ENCODE measurements at regions of chr6 and their contacts with region 1.

Region 1: DNA sequence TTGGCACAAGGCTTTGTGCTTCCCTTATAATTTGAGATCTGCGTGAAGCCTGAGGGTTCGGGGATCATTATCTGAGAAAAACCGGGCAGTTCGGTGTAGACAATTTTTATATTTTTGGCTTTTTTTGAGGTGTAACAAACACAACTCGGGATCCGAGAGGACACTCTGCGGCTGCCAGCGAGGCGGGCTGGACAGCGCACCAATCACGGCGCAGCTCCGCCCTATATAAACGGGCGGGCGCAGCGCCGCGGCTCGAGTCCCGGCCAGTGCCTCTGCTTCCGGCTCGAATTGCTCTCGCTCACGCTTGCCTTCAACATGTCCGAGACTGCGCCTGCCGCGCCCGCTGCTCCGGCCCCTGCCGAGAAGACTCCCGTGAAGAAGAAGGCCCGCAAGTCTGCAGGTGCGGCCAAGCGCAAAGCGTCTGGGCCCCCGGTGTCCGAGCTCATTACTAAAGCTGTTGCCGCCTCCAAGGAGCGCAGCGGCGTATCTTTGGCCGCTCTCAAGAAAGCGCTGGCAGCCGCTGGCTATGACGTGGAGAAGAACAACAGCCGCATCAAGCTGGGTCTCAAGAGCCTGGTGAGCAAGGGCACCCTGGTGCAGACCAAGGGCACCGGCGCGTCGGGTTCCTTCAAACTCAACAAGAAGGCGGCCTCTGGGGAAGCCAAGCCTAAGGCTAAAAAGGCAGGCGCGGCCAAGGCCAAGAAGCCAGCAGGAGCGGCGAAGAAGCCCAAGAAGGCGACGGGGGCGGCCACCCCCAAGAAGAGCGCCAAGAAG is 69.0 kb downstream of the HFE start:
- DNase-seq: peak; percentile 76 to 94 (median 88)
- ATAC-seq: peak; percentile 33
- H3K4me3 ChIP-seq: peak overlapping the region; percentile 92
- H3K4me3 Mint-ChIP-seq: peak overlapping the region; percentile 99
- H3K27ac ChIP-seq: peak overlapping the region; percentile 67 to 91
- H3K27ac Mint-ChIP-seq: peak overlapping the region; percentile 97
- H3K4me1 ChIP-seq: peaks cover 37% of the 10 kb centered on the region
- H3K4me1 Mint-ChIP-seq: peaks cover 40% of the 10 kb centered on the region
- H3K27me3 ChIP-seq: no peaks in the 10 kb centered on the region
- H3K27me3 Mint-ChIP-seq: peaks cover 12% of the 10 kb centered on the region
- CTCF ChIP-seq: no peak

Region 2: GRCh38 chr6:25821341-25821740 is 334.9 kb before region 1 on chr6:
- CTCF ChIA-PET with region 1: no interaction called
- POLR2A ChIA-PET with region 1: no interaction called
- intact Hi-C with region 1: no loop called
- DNase-seq: no peak
- ATAC-seq: no peak
- H3K4me3 ChIP-seq: no peak overlapping the region
- H3K4me3 Mint-ChIP-seq: no peak overlapping the region
- H3K27ac ChIP-seq: no peak overlapping the region
- H3K27ac Mint-ChIP-seq: no peak overlapping the region
- H3K4me1 ChIP-seq: no peaks in the 10 kb centered on the region
- H3K4me1 Mint-ChIP-seq: no peaks in the 10 kb centered on the region
- H3K27me3 ChIP-seq: no peaks in the 10 kb centered on the region
- H3K27me3 Mint-ChIP-seq: peaks cover 22% of the 10 kb centered on the region
- CTCF ChIP-seq: no peak

Region 3: GRCh38 chr6:26025894-26026832 is 130.1 kb before region 1 on chr6:
- CTCF ChIA-PET with region 1: no interaction called
- POLR2A ChIA-PET with region 1: interaction called, 164 read pairs
- intact Hi-C with region 1: loop called in 1 of 2 experiments (anchors 2 kb)
- DNase-seq: peak; percentile 75 to 98 (median 88)
- ATAC-seq: peak; percentile 45
- H3K4me3 ChIP-seq: peak overlapping the region; percentile 70
- H3K4me3 Mint-ChIP-seq: peak overlapping the region; percentile 90
- H3K27ac ChIP-seq: peak overlapping the region; percentile 86 to 88
- H3K27ac Mint-ChIP-seq: peak overlapping the region; percentile 97
- H3K4me1 ChIP-seq: peaks cover 34% of the 10 kb centered on the region
- H3K4me1 Mint-ChIP-seq: peaks cover 42% of the 10 kb centered on the region
- H3K27me3 ChIP-seq: no peaks in the 10 kb centered on the region
- H3K27me3 Mint-ChIP-seq: no peaks in the 10 kb centered on the region
- CTCF ChIP-seq: peak; percentile 86

Region 4: DNA sequence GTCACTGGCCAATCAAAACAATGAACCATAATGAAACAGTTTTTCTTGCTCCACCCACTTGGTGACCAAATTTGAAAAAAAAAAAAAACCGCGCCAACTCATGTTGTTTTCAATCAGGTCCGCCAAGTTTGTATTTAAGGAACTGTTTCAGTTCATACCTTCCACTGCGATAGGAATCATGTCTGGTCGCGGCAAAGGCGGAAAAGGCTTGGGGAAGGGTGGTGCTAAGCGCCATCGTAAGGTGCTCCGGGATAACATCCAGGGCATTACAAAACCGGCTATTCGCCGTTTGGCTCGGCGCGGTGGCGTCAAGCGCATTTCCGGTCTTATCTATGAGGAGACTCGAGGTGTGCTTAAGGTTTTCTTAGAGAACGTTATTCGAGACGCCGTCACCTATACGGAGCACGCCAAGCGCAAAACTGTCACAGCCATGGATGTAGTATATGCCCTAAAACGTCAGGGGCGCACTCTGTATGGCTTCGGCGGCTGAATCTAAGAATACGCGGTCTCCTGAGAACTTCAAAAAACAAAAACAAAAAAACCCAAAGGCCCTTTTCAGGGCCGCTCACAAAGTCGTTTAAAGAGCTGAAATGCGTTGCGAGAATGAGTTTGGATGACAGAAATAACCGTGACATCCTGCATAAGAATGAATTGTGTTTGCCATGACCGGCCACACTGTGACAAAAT is 52.4 kb before region 1 on chr6:
- CTCF ChIA-PET with region 1: interaction called, 18 read pairs
- POLR2A ChIA-PET with region 1: interaction called, 261 read pairs
- intact Hi-C with region 1: loop called (anchors 1 kb)
- DNase-seq: peak; percentile 84 to 96 (median 90)
- ATAC-seq: peak; percentile 88
- H3K4me3 ChIP-seq: peak overlapping the region; percentile 58
- H3K4me3 Mint-ChIP-seq: peak overlapping the region; percentile 94
- H3K27ac ChIP-seq: peak overlapping the region; percentile 83 to 85
- H3K27ac Mint-ChIP-seq: peak overlapping the region; percentile 99
- H3K4me1 ChIP-seq: peaks cover 16% of the 10 kb centered on the region
- H3K4me1 Mint-ChIP-seq: peaks cover 13% of the 10 kb centered on the region
- H3K27me3 ChIP-seq: no peaks in the 10 kb centered on the region
- H3K27me3 Mint-ChIP-seq: peaks cover 5% of the 10 kb centered on the region
- CTCF ChIP-seq: peak; percentile 58

Region 5: GRCh38 chr6:26196846-26197648 is 40.8 kb after region 1 on chr6:
- CTCF ChIA-PET with region 1: interaction called, 35 read pairs
- POLR2A ChIA-PET with region 1: interaction called, 1,305 read pairs
- intact Hi-C with region 1: loop called (anchors 1 to 2 kb)
- DNase-seq: peak; percentile 60 to 97 (median 70)
- ATAC-seq: peak; percentile 55
- H3K4me3 ChIP-seq: peak overlapping the region; percentile 75
- H3K4me3 Mint-ChIP-seq: peak overlapping the region; percentile 94
- H3K27ac ChIP-seq: peak overlapping the region; percentile 81 to 87
- H3K27ac Mint-ChIP-seq: peak overlapping the region; percentile 97
- H3K4me1 ChIP-seq: peaks cover 26% of the 10 kb centered on the region
- H3K4me1 Mint-ChIP-seq: peaks cover 57% of the 10 kb centered on the region
- H3K27me3 ChIP-seq: no peaks in the 10 kb centered on the region
- H3K27me3 Mint-ChIP-seq: no peaks in the 10 kb centered on the region
- CTCF ChIP-seq: no peak

Region 6: GRCh38 chr6:26285143-26286134 is 129.2 kb after region 1 on chr6:
- CTCF ChIA-PET with region 1: no interaction called
- POLR2A ChIA-PET with region 1: interaction called, 98 read pairs
- intact Hi-C with region 1: no loop called
- DNase-seq: peak; percentile 85 to 99 (median 92)
- ATAC-seq: peak; percentile 82
- H3K4me3 ChIP-seq: peak overlapping the region; percentile 62
- H3K4me3 Mint-ChIP-seq: peak overlapping the region; percentile 87
- H3K27ac ChIP-seq: peak overlapping the region; percentile 82 to 85
- H3K27ac Mint-ChIP-seq: peak overlapping the region; percentile 96
- H3K4me1 ChIP-seq: peaks cover 16% of the 10 kb centered on the region
- H3K4me1 Mint-ChIP-seq: peaks cover 24% of the 10 kb centered on the region
- H3K27me3 ChIP-seq: no peaks in the 10 kb centered on the region
- H3K27me3 Mint-ChIP-seq: peaks cover 11% of the 10 kb centered on the region
- CTCF ChIP-seq: no peak

Region 7: DNA sequence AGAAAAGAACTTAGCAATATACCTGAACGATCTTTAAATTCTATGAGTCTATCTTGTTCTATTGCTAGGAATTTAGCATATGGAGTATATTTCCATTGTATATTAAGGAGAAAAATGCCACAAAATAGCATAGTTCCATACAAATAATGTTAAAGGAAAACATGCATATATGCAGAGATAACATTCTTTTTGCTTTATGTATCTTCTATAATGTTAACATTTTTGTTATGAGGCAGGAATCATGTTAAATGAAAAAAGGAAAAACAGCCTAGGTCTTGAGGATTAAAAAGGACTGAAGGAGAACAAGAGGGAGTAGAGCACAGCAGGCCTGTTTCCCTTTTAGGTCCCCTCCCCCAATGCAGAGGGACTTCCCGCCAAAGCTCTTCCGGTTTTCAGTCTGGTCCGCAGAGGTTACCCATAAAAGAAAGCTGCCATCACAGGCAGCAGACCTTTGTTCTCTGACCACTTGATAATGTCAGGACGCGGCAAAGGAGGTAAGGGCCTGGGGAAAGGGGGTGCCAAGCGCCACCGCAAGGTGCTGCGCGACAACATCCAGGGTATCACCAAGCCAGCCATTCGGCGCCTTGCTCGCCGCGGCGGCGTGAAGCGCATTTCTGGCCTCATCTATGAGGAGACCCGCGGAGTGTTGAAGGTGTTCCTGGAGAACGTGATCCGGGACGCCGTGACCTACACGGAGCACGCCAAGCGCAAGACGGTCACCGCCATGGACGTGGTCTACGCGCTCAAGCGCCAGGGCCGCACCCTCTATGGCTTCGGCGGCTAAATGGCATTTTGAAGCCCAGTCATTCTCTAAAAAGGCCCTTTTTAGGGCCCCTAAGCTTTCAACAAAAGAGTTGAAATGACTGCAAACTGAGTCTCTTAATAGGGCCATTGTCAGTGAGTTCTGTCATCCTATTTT is 982.8 kb after region 1 on chr6:
- CTCF ChIA-PET with region 1: no interaction called
- POLR2A ChIA-PET with region 1: interaction called, 112 read pairs
- intact Hi-C with region 1: no loop called
- DNase-seq: peak in 12 of 14 experiments; percentile 28 to 89 (median 52)
- ATAC-seq: peak; percentile 78
- H3K4me3 ChIP-seq: peak overlapping the region; percentile 80
- H3K4me3 Mint-ChIP-seq: peak overlapping the region; percentile 95
- H3K27ac ChIP-seq: peak overlapping the region; percentile 89 to 90
- H3K27ac Mint-ChIP-seq: peak overlapping the region; percentile 95
- H3K4me1 ChIP-seq: peaks cover 13% of the 10 kb centered on the region
- H3K4me1 Mint-ChIP-seq: peaks cover 43% of the 10 kb centered on the region
- H3K27me3 ChIP-seq: no peaks in the 10 kb centered on the region
- H3K27me3 Mint-ChIP-seq: no peaks in the 10 kb centered on the region
- CTCF ChIP-seq: no peak

Region 8: DNA sequence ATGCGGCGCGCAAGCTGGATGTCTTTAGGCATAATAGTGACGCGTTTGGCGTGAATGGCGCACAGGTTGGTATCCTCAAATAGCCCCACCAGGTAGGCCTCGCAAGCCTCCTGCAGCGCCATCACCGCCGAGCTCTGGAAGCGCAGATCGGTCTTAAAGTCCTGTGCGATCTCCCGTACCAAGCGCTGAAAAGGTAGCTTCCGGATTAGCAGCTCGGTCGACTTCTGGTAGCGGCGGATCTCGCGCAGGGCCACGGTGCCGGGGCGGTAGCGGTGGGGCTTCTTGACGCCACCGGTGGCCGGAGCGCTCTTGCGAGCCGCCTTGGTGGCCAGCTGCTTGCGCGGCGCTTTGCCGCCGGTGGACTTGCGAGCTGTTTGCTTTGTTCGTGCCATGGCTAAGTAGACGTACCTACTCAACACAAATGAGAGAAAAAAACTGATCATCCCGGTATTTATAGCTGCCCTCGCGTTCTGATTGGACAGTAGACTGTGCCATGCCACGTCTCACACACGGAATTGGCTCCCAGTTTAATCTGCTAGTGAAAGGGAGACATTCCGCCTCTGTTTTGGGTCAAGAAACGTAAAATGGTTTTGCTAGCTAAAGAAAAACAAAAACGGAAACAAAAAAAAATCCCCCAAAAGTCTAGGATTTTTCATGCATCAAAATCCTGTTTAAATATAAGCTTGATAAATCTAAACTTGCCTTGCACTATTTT is 1715.8 kb after region 1 on chr6:
- CTCF ChIA-PET with region 1: no interaction called
- POLR2A ChIA-PET with region 1: interaction called, 110 read pairs
- intact Hi-C with region 1: no loop called
- DNase-seq: peak; percentile 71 to 97 (median 82)
- ATAC-seq: peak; percentile 75
- H3K4me3 ChIP-seq: peak overlapping the region; percentile 86
- H3K4me3 Mint-ChIP-seq: peak overlapping the region; percentile 93
- H3K27ac ChIP-seq: peak overlapping the region; percentile 89
- H3K27ac Mint-ChIP-seq: peak overlapping the region; percentile 93
- H3K4me1 ChIP-seq: peaks cover 39% of the 10 kb centered on the region
- H3K4me1 Mint-ChIP-seq: peaks cover 41% of the 10 kb centered on the region
- H3K27me3 ChIP-seq: no peaks in the 10 kb centered on the region
- H3K27me3 Mint-ChIP-seq: no peaks in the 10 kb centered on the region
- CTCF ChIP-seq: peak; percentile 43